Psoas muscle (tissue), 8 donors: ENCODE measurements at regions of chr2 and their contacts with region 1.

Region 1: DNA sequence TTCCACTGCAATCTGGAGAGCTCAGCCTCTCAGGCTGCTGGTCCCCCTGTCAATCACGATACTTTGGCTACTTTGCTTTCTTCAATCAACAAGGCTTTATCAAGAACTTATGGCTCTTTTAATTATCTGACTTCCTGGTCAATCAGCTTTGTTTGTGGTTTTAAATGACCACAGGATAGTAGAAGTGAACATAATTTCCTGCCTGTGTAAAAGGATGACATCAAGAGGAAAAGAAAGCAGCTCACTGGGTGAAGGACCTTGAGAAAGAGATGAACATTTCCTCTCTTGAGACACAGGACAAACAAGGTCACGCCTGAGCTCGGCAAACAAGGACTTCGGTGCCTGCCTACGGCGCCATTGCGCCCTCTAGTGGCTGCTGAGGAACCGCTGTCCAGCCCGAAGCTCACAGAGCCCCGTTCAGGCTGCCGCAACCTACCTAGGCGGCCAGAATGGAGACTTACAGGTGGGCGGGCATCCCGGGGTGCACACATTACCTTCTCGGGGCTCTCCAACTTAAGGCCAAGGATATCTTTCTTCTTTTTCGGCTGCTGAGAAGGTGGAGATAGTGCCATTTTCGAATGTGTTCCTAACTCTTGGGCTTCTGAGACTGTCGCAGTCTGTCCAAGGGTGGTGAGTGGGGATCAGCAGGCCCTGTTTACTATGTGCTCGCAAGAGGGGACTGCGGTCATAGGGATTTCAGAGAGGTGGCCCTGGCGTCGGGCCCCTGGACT is 54.0 kb downstream of the IL1RL2 start:
- DNase-seq: peak; percentile 90 to 96
- ATAC-seq: peak; percentile 96 to 99 (median 98)
- H3K4me3 ChIP-seq: no peak overlapping the region
- H3K27ac ChIP-seq: peak overlapping the region; percentile 41
- H3K4me1 ChIP-seq: no peaks in the 10 kb centered on the region
- H3K27me3 ChIP-seq: no peaks in the 10 kb centered on the region
- CTCF ChIP-seq: peak; percentile 99

Region 2: DNA sequence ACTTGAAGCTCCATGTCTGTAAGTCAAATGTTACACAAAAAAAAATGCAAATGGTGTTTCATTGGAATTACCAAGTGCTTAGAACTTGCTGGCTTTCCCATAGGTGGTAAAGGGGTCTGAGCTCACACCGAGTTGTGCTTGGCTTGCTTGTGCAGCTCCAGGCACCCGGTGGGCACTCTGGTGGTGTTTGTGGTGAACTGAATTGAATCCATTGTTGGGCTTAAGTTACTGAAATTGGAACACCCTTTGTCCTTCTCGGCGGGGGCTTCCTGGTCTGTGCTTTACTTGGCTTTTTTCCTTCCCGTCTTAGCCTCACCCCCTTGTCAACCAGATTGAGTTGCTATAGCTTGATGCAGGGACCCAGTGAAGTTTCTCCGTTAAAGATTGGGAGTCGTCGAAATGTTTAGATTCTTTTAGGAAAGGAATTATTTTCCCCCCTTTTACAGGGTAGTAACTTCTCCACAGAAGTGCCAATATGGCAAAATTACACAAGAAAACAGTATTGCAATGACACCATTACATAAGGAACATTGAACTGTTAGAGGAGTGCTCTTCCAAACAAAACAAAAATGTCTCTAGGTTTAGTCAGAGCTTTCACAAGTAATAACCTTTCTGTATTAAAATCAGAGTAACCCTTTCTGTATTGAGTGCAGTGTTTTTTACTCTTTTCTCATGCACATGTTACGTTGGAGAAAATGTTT is 347.0 kb before region 1 on chr2:
- intact Hi-C with region 1: loop called in 1 of 2 experiments (anchors 10 kb)
- DNase-seq: no peak
- ATAC-seq: no peak
- H3K4me3 ChIP-seq: no peak overlapping the region
- H3K27ac ChIP-seq: no peak overlapping the region
- H3K4me1 ChIP-seq: no peaks in the 10 kb centered on the region
- H3K27me3 ChIP-seq: no peaks in the 10 kb centered on the region
- CTCF ChIP-seq: no peak

Region 3: DNA sequence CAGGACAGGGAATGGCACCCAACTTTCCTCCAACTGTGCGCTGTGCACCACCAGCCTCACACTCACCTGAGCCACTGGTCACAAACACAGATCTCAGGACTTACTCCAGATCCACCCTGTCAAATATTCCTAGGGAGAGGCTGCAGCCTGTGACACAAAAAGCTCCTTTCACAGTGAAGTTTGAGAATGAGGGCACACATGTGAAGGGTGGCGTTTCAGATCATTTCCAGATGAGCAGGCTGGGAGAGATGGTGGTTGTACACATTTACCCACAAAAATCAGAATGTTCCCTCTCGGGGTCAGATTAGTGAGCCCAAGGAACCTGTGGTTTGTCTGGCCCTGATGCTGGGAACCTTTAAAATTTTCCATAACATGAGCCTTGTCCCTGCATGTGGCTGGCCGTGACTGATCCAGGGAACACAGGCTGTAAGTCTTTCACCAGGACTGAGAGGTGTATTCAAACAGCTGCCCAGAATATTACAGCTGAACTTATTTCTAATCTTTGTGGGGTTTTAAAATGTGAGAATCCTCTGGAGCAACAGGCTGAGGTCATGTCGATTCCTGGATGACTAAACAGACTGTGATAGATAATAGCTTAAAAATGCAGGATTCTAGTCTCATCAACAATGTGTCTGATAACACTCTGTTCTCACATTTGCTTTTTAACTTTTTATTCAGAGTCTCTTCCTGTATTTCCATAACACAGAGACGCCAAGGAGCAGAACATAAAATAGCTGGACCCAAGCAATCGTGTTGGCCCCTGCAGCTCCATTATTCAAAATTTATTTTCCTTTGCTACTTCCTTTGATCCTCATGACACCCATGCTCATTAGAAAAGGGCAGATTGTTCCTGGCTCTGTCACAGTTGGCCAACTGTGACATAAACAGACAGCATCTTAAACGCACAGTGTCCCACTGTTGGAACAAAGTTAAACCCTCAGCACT is 213.5 kb before region 1 on chr2:
- intact Hi-C with region 1: no loop called
- DNase-seq: no peak
- ATAC-seq: peak; percentile 36 to 81 (median 72)
- H3K4me3 ChIP-seq: no peak overlapping the region
- H3K27ac ChIP-seq: peak overlapping the region; percentile 50
- H3K4me1 ChIP-seq: peaks cover 20% of the 10 kb centered on the region
- H3K27me3 ChIP-seq: no peaks in the 10 kb centered on the region
- CTCF ChIP-seq: no peak